Activated CD4-positive, alpha-beta T cell treated with anti-CD3 and anti-CD28 coated beads for 36 hours (primary cell): ENCODE measurements at regions of chr9 and their contacts with region 1.

Region 1: GRCh38 chr9:94554439-94555391 is at the start of gene PCAT7:
- DNase-seq: peak; percentile 54
- ATAC-seq: peak; percentile 65
- H3K4me3 Mint-ChIP-seq: no peak within 1 kb of the TSS
- H3K27ac Mint-ChIP-seq: no peak within 1 kb of the TSS
- H3K4me1 Mint-ChIP-seq: no peaks in the 10 kb centered on the region
- H3K27me3 Mint-ChIP-seq: peaks cover 10% of the 10 kb centered on the region
- total RNA-seq, gene PCAT7: not detected

Region 2: DNA sequence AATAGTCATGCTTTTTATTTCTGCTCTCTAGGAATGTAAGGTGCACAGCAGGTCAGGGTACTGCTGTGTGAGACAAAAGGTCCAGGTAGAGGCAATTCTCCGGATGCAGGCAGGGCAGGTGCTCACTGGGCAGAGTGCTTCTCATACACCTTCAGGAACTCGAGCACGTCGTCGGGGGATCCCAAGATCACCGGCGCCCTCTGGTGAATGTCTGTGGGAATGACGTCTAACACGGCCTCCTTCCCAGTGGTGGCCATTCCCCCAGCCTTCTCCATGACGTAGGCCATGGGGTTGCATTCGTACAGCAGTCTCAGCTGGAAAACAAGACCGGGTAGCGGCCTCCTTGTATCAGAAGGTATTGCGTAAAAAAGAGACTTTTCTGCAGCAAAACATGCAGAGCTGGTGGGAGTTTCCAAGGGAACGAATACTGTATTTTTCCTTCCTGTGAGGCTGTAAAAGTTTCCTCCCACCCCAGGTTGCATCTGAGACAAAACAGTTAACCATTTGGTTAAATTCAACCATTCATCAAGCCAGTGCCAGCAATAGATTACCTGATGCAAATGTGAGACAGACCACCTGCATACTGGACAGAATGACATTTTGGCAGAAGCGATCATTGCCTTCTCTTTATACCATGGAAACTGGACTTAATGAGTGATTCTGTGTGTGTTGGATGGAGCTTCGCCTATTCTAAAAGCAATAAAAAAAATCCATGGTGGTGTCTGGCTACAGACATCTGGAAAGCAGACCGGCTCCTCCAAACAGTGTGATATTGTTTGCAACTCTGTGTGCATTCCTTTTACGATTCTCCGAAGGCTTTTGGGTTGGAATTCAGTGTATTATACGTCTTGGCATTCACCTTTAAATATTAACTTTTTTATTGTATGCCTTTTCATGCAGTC is 48.8 kb after region 1 on chr9:
- CTCF ChIA-PET with region 1: no interaction called
- POLR2A ChIA-PET with region 1: no interaction called
- intact Hi-C with region 1: loop called (anchors 1 kb)
- DNase-seq: peak; percentile 87
- ATAC-seq: peak; percentile 96
- H3K4me3 Mint-ChIP-seq: no peak overlapping the region
- H3K27ac Mint-ChIP-seq: no peak overlapping the region
- H3K4me1 Mint-ChIP-seq: peaks cover 6% of the 10 kb centered on the region
- H3K27me3 Mint-ChIP-seq: peaks cover 7% of the 10 kb centered on the region

Region 3: GRCh38 chr9:94623253-94623652 is 68.5 kb after region 1 on chr9:
- CTCF ChIA-PET with region 1: no interaction called
- POLR2A ChIA-PET with region 1: no interaction called
- intact Hi-C with region 1: no loop called
- DNase-seq: no peak
- ATAC-seq: no peak
- H3K4me3 Mint-ChIP-seq: no peak overlapping the region
- H3K27ac Mint-ChIP-seq: no peak overlapping the region
- H3K4me1 Mint-ChIP-seq: peaks cover 5% of the 10 kb centered on the region
- H3K27me3 Mint-ChIP-seq: peaks cover 8% of the 10 kb centered on the region

Region 4: DNA sequence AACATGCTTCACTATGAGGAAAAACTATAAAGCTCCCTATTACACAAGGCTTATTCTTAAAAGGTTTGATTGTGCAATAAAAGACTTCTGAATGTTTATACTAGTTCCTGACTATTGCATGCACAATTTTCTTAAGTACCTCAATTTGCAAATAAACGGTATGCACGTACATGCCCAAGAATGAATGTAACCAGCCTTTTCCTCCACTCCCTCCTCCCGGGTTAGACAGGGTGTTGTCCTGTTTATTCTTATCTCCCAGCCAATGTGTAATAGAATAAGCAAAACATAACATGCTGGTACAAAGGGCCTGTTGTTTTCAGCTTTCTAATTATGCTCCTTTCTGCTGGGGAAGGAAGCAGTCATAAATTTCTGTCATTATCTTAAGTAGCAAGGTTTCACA is 250.9 kb after region 1 on chr9:
- CTCF ChIA-PET with region 1: no interaction called
- POLR2A ChIA-PET with region 1: no interaction called
- intact Hi-C with region 1: no loop called
- DNase-seq: no peak
- ATAC-seq: no peak
- H3K4me3 Mint-ChIP-seq: no peak overlapping the region
- H3K27ac Mint-ChIP-seq: no peak overlapping the region
- H3K4me1 Mint-ChIP-seq: peaks cover 26% of the 10 kb centered on the region
- H3K27me3 Mint-ChIP-seq: no peaks in the 10 kb centered on the region